ENCODE measurements at regions of chr3 and their contacts with region 1.

Region 1: DNA sequence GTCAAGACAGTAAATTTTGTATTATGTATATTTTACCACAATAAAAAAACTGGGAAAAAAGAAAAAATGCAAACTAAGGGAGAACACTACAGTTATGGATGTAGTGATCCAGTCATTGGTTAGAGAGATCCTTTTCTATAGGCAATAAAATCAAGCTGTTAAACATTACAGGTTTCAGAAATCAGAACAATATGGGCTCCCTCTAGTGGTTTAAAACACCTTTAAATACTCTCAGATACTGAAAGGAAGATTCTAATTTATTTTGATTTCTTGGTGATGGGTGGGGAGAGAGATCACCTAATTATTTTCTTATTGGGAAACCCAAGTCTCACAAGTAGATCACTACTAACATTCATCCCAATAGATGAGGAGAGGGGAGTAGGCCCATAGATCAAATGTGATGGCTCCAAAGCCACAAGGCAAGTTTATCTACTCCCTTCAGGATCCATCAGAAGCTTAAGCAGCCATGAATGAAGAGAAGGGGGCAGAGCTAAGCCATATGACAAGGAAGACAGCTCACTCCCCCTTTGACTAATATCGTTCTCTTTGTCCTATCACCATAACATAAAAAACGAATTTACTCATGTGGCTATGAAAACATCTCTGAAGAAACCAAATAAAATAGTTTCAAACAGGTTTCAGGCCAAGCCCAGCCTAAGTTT is 118.6 kb downstream of the ANO10 start:
- DNase-seq: peak; percentile 32
- H3K4me3 ChIP-seq: no peak overlapping the region
- H3K27ac ChIP-seq: no peak overlapping the region
- H3K4me1 ChIP-seq: no peaks in the 10 kb centered on the region
- CTCF ChIP-seq: peak; percentile 78

Region 2: DNA sequence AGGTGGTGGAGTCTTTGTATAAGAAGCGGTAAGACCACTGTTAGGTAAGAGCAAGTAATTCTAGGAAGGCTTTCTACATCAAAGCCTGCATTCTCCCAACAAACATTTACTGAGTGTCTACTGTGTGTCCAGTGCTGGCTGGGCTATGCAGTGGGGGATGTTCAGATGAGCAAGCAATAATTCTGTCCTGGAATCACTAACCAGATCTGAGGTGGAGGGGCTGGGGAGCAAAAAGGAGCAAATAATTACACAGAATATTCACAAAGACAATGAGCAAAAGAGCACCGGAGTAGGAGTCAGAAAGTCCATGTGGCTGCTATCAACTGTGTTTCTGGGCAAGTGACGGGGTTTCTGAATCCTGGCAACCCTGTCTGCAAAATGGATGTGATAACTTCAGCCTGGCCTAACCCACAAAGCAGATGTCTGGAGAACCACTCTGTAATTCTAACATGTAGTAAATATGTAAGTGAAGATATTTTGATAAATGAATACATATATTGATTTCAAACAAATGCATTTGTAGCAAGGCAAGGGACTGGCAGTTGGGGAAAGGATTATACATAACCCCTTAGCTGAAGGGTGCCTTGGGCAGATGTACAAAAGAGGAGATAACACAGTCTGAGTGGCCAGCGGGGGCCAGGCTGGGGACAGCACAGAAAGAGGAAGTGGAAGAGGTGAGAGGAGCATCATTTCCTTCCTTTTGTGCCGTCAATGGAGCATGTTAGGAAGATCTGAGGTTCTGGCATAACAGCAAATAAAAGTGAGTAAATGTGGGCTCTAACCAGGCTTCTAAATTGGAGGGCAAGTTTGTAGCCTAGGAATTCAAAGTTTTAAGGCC is 656.3 kb before region 1 on chr3:
- CTCF ChIA-PET with region 1: no interaction called
- POLR2A ChIA-PET with region 1: no interaction called
- intact Hi-C with region 1: no loop called
- DNase-seq: peak; percentile 22
- H3K4me3 ChIP-seq: no peak overlapping the region
- H3K27ac ChIP-seq: no peak overlapping the region
- H3K4me1 ChIP-seq: peaks cover 13% of the 10 kb centered on the region
- CTCF ChIP-seq: no peak

Region 3: GRCh38 chr3:42961633-42962032 is 541.6 kb before region 1 on chr3:
- CTCF ChIA-PET with region 1: no interaction called
- POLR2A ChIA-PET with region 1: no interaction called
- intact Hi-C with region 1: loop called (anchors 10 kb)
- DNase-seq: peak; percentile 19
- H3K4me3 ChIP-seq: no peak overlapping the region
- H3K27ac ChIP-seq: no peak overlapping the region
- H3K4me1 ChIP-seq: no peaks in the 10 kb centered on the region
- CTCF ChIP-seq: peak; percentile 75

Region 4: DNA sequence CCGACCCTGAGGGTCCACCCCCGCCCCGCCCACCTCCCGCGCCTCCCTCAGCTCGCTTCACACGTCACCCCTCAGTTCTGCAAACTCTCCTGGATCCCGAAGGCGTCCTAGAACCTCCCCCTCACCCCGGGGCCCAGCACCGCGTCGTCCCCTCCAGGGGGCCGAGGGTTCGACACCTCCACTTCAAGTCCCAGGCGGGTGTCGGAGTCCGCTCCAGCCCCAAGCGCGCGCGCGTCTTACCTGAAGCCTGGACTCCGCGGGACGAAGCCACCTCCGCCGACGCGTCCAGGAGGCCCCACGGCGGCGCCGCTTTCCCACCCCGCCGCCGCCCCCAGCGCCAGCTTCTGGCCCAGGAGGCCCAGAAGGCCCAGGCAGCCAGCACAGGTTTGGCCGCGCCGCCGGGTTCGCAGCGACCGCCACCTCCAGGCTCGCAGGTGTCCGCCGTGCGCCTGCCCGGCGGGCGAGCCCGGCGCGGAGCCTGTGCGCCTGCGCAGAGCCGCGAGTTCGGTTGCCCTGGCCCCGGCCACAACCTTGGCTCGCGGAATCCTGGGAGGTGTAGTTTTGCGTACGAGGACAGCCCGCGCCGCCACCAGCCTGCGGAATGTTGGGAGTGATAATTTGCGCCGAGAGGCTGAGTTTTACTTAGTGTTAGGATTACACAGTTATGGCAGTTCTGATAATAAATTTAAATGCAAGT is 397.5 kb before region 1 on chr3 and contains the start of gene POMGNT2:
- CTCF ChIA-PET with region 1: no interaction called
- POLR2A ChIA-PET with region 1: no interaction called
- intact Hi-C with region 1: no loop called
- DNase-seq: no peak
- H3K4me3 ChIP-seq: no peak within 1 kb of the TSS
- H3K27ac ChIP-seq: no peak within 1 kb of the TSS
- H3K4me1 ChIP-seq: no peaks in the 10 kb centered on the region
- CTCF ChIP-seq: no peak
- total RNA-seq, gene POMGNT2: not detected in 2 replicates

Region 5: GRCh38 chr3:43223670-43224364 is 279.4 kb before region 1 on chr3:
- CTCF ChIA-PET with region 1: no interaction called
- POLR2A ChIA-PET with region 1: no interaction called
- intact Hi-C with region 1: loop called (anchors 10 kb)
- DNase-seq: peak; percentile 4
- H3K4me3 ChIP-seq: no peak overlapping the region
- H3K27ac ChIP-seq: no peak overlapping the region
- H3K4me1 ChIP-seq: no peaks in the 10 kb centered on the region
- CTCF ChIP-seq: peak; percentile 67

Region 6: DNA sequence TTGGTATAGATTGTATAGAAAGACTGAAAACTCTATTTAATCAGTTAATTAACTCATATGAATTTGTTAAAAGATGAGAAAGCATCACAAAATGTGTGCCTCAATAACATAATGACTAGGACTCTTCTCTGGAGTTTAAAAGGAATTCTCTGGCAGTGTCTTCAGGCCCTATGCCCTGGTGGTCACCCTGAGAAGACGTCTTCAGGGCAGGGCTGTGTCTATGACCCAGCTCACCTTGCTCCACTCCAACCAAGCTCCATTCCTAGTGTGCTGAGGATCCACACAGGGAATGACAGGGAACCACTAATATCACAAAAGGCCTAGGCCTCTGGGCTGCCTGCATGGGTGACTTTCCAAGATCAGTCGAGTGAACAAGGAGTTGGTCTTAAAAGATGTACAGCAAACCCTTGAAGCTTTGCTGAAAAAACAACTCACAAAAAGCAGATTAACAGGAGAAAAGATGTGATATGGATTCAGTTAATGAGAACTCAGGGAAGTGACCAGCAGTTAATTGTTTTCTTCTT is 60.3 kb before region 1 on chr3:
- CTCF ChIA-PET with region 1: no interaction called
- POLR2A ChIA-PET with region 1: no interaction called
- intact Hi-C with region 1: loop called (anchors 10 kb)
- DNase-seq: no peak
- H3K4me3 ChIP-seq: no peak overlapping the region
- H3K27ac ChIP-seq: no peak overlapping the region
- H3K4me1 ChIP-seq: no peaks in the 10 kb centered on the region
- CTCF ChIP-seq: no peak

Region 7: DNA sequence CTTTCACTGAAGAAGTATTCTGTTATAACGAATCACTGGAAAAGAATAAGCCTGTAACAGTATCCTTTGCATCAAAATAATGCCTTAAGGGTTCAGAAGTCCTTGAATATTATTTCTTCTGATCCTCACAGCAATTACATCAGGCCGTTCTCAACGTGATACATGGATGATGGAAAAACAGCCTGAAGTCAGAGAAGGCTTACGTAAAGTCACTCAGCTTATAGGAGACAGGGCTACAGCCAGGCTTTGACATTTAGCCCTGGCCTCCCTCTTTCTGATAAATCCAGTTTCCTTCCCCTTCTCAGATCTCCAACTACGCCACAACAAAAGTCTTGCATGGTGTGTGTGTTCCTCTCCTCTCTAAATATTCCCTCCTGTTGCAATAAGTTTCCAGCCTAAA is 13.3 kb before region 1 on chr3:
- CTCF ChIA-PET with region 1: no interaction called
- POLR2A ChIA-PET with region 1: no interaction called
- intact Hi-C with region 1: no loop called
- DNase-seq: no peak
- H3K4me3 ChIP-seq: no peak overlapping the region
- H3K27ac ChIP-seq: no peak overlapping the region
- H3K4me1 ChIP-seq: no peaks in the 10 kb centered on the region
- CTCF ChIP-seq: no peak